Posterior vena cava (tissue), 2 donors: ENCODE measurements at regions of chr10 and their contacts with region 1.

Region 1: GRCh38 chr10:88386821-88387773 is 196.0 kb downstream of the RNLS start:
- DNase-seq: no peak

Region 2: DNA sequence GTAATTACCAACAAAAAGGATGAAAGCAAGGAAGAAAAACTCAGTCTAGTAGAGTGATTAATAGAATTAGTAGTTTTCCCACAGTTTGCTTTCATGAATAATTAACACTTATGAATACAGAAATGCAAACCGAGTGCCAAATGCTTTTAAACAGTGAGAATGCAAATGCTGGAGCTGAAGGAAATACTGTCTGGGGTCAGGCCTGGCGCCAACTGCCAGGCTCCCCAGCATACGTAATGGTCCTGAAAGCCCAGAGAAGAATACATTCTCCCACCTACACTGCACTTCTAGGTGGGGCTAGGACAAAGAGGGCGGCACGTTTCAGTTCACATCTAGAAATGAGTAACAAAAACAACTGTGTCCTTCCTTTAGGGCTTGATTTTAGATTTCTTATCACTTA is 1322.4 kb before region 1 on chr10:
- intact Hi-C with region 1: no loop called
- DNase-seq: no peak

Region 3: GRCh38 chr10:88243836-88244730 is 143.0 kb before region 1 on chr10:
- intact Hi-C with region 1: loop called in 1 of 2 experiments (anchors 10 kb)
- DNase-seq: peak; percentile 88

Region 4: GRCh38 chr10:88401671-88402347 is 14.7 kb after region 1 on chr10:
- intact Hi-C with region 1: no loop called
- DNase-seq: no peak